ENCODE measurements at regions of chr2 and their contacts with region 1.

Region 1: DNA sequence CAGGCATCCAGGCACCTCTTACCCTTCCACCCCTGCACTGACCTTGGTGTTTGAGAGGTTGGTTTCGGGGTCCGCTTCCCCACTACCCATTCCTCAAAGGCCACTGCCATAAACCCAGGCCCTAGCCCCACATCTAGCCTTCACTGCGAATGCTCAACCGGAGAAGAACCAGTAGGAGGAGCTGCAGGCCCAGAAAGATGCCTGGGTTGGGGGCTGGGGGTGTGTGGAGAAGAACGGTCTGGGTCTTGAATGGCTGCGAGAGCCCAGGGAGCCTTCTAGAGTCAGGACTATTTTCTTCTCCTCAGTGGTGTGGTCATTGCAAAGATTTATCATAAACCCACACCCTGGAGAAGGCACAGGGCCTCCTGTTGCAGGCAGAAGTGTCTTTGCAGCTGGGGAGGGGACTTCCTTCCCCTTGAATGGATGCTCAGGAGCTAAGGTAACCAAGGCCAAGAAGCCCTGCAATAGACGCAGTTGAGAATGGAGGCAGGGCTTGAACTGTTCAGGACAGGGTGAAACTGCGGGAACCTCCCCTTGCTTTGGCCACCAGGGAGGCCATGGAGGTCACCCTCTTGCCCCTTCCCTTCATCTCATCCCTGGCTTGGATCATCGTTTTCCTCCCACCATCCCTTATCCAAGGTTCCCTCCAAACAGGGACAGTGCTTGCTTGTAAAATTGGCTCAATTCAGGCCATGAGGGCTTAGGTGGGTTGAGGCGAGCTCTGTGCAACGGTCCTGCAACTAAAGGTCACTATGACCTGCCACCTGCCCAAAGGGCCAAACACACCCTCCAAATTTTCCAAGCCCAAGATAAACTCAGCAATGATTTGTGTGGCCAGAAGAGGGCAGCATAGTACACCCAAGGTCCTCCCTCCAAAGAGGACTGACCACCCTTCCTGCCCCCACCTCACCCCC is 20.9 kb downstream of the THNSL2 start:
- DNase-seq: peak in 2 of 9 experiments; percentile 47 to 55
- ATAC-seq: no peak
- H3K4me3 ChIP-seq: no peak overlapping the region
- H3K4me3 Mint-ChIP-seq: no peak overlapping the region
- H3K27ac ChIP-seq: no peak overlapping the region
- H3K27ac Mint-ChIP-seq: no peak overlapping the region
- H3K4me1 ChIP-seq: no peaks in the 10 kb centered on the region
- H3K4me1 Mint-ChIP-seq: no peaks in the 10 kb centered on the region
- H3K27me3 ChIP-seq: no peaks in the 10 kb centered on the region
- H3K27me3 Mint-ChIP-seq: peaks cover 36% of the 10 kb centered on the region
- CTCF ChIP-seq: peak; percentile 35

Region 2: GRCh38 chr2:88307817-88308216 is 116.8 kb after region 1 on chr2:
- CTCF ChIA-PET with region 1: interaction called, 7 read pairs
- POLR2A ChIA-PET with region 1: no interaction called
- intact Hi-C with region 1: loop called (anchors 2 to 5 kb)
- DNase-seq: peak in 3 of 9 experiments; percentile 5 to 55 (median 48)
- ATAC-seq: no peak
- H3K4me3 ChIP-seq: no peak overlapping the region
- H3K4me3 Mint-ChIP-seq: no peak overlapping the region
- H3K27ac ChIP-seq: no peak overlapping the region
- H3K27ac Mint-ChIP-seq: no peak overlapping the region
- H3K4me1 ChIP-seq: no peaks in the 10 kb centered on the region
- H3K4me1 Mint-ChIP-seq: no peaks in the 10 kb centered on the region
- H3K27me3 ChIP-seq: no peaks in the 10 kb centered on the region
- H3K27me3 Mint-ChIP-seq: peaks cover 18% of the 10 kb centered on the region
- CTCF ChIP-seq: peak; percentile 38